Prostate gland (tissue), 2 donors: ENCODE measurements at regions of chr12 and their contacts with region 1.

Region 1: DNA sequence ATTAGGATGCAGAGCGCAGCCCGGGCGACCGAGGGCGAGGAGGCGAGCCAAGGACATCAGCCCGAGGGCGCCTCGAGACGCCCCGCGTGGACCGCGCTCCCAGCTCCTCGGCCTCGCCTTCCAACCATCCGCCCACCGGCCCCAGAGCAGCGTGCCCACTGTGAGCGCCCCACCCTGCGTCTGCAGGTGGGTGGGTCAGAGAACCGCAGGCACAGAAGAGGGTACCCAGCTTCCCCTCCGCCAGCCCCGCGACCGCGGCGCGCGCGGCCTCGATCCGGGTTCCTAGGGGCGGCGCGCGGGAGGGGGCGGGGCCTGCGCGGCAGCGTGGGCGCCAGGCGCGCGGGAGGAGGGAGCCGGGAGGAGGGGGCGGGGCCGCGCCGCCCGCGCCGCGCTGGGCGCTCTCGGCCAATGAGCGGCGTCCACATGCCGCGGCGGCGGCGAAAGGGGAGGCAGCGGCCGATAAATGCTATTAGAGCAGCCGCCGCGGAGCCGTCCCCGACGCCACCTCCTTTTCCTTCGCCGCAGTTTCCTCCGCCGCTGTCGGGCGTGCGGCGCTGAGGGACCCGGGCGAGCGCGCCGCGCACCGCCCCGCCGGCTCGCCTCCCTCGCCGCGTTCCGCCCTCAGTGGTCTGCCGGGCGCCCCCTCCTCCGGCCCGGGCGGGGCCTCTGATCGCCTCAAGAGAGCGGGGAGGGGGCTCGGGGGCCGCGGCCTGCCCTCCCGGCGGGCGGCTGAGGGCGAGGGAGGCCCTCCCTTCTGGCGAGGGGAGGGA is at the start of gene ATP2A2:
- DNase-seq: peak; percentile 89
- H3K4me3 ChIP-seq: peak within 1 kb of the TSS; percentile 93 to 94
- H3K27ac ChIP-seq: peak within 1 kb of the TSS; percentile 96 to 98
- H3K4me1 ChIP-seq: peaks cover 6% of the 10 kb centered on the region
- H3K27me3 ChIP-seq: no peaks in the 10 kb centered on the region
- CTCF ChIP-seq: peak in 1 of 4 experiments; percentile 8
- POLR2A ChIP-seq: peak; percentile 94
- total RNA-seq, gene ATP2A2: 121 to 209 TPM

Region 2: DNA sequence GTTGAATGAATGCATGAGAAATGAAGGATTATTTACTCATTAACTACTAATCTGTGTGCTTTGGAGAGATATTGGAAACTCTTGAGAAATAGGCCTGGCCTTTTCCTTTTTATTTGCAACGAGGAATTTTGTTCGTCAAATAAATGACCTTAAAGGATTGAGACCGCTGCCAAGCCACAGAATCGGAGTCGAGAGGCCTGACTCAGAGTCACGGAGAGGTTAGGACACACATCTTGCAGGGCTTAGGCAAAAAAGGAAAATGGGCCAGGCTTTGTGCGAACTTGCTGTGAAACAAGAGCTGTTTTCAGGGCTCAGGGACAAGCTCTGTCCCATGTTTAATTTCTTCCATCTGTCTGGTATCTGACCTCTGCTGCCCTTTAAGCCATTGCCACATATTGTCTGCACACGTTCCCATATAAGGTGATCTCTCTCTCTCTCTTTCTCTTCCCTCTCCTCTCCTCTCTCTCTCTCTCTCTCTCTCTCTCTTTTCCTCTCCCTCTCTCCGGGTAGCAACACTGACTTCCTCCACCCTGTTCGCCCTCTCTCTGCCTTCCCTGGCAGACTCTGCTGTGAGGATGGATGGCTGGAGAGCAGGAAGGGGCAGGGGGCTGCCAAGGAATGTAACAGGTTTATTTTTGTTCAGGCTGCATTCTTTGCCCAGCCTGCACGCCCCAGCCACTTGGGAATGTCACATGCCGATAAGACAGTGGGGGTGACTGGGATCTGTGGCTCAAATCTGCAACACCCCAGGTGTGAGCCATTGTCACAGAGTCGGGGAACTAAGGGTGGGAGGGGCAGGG is 171.7 kb before region 1 on chr12:
- intact Hi-C with region 1: loop called (anchors 5 kb)
- DNase-seq: peak; percentile 69
- H3K4me3 ChIP-seq: no peak overlapping the region
- H3K27ac ChIP-seq: peak overlapping the region; percentile 83 to 87
- H3K4me1 ChIP-seq: no peaks in the 10 kb centered on the region
- H3K27me3 ChIP-seq: no peaks in the 10 kb centered on the region
- CTCF ChIP-seq: no peak
- POLR2A ChIP-seq: no peak

Region 3: DNA sequence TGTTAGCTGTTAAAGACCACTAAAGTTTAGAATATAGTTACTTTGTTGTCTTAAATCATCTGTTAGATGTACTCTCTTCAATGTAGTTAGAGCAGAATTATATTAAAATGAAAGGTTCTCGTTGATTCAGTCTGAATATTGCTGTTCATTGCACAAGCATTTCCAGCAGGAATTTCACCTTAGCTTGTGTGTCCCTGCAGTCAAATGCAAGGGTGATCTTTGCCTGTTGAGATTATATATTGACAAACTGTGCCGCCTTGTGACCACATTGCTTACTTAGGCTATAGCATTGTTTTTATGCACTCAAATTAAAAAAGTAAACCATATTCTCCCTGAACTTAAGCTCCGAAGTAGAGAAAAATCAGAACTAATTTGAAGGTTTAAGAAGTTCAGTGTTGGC is 39.6 kb after region 1 on chr12:
- intact Hi-C with region 1: no loop called
- DNase-seq: no peak
- H3K4me3 ChIP-seq: no peak overlapping the region
- H3K27ac ChIP-seq: no peak overlapping the region
- H3K4me1 ChIP-seq: no peaks in the 10 kb centered on the region
- H3K27me3 ChIP-seq: no peaks in the 10 kb centered on the region
- CTCF ChIP-seq: no peak
- POLR2A ChIP-seq: no peak

Region 4: DNA sequence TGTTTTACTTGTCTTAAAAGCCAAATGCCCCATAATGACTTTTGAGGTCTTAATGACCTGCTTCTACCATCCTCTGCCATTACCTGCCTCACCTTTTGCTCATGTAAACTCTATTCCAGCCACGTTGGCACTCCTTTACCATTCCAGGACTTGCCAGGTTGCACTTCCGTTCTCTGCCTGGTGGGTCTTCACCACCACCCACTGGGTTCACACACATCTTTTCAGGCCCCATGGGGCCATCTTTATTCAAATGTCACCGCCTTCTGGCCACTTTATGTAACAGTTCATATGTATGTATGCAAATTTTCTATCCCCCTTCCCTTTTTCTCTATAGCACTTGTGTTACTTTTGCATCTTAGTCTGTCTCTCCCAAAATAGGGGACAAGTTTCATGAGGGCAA is 57.8 kb after region 1 on chr12:
- intact Hi-C with region 1: no loop called
- DNase-seq: no peak
- H3K4me3 ChIP-seq: no peak overlapping the region
- H3K27ac ChIP-seq: peak overlapping the region; percentile 54 to 78
- H3K4me1 ChIP-seq: peaks cover 9% of the 10 kb centered on the region
- H3K27me3 ChIP-seq: no peaks in the 10 kb centered on the region
- CTCF ChIP-seq: peak in 1 of 4 experiments; percentile 18
- POLR2A ChIP-seq: no peak

Region 5: GRCh38 chr12:110371408-110372055 is 90.6 kb after region 1 on chr12:
- intact Hi-C with region 1: no loop called
- DNase-seq: peak; percentile 33
- H3K4me3 ChIP-seq: no peak overlapping the region
- H3K27ac ChIP-seq: peak overlapping the region; percentile 70 to 73
- H3K4me1 ChIP-seq: peaks cover 12% of the 10 kb centered on the region
- H3K27me3 ChIP-seq: no peaks in the 10 kb centered on the region
- CTCF ChIP-seq: no peak
- POLR2A ChIP-seq: no peak

Region 6: GRCh38 chr12:110426406-110426805 is 145.4 kb after region 1 on chr12:
- intact Hi-C with region 1: loop called (anchors 10 kb)
- DNase-seq: no peak
- H3K4me3 ChIP-seq: no peak overlapping the region
- H3K27ac ChIP-seq: no peak overlapping the region
- H3K4me1 ChIP-seq: no peaks in the 10 kb centered on the region
- H3K27me3 ChIP-seq: no peaks in the 10 kb centered on the region
- CTCF ChIP-seq: no peak
- POLR2A ChIP-seq: no peak